Head of caudate nucleus (tissue), 42 donors: ENCODE measurements at regions of chrX and their contacts with region 1.

Region 1: GRCh38 chrX:13747836-13748235 is 13.3 kb downstream of the OFD1 start:
- DNase-seq: peak in 25 of 42 donors; percentile 12 to 79 (median 47)

Region 2: DNA sequence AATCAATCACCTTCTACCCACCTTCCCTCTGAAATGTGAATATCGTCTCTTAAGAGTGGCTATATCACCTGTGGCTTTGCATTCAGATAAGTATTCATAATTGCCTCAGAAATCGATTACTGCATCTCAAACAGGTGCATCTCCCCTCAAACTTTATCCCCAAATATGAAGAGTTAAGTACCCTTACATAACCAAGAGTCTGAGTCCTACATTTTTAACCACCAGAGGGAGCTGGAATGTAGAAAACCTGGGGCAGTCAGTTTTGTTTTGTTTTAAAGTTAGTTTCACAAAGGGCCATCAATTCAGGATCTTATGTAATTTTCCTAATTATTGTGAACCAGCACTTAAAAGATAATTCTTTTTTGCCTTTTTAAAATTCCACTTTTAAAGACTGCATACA is 89.2 kb before region 1 on chrX:
- intact Hi-C with region 1: loop called (anchors 5 kb)
- DNase-seq: peak in 7 of 42 donors; percentile 8 to 58 (median 45)

Region 3: DNA sequence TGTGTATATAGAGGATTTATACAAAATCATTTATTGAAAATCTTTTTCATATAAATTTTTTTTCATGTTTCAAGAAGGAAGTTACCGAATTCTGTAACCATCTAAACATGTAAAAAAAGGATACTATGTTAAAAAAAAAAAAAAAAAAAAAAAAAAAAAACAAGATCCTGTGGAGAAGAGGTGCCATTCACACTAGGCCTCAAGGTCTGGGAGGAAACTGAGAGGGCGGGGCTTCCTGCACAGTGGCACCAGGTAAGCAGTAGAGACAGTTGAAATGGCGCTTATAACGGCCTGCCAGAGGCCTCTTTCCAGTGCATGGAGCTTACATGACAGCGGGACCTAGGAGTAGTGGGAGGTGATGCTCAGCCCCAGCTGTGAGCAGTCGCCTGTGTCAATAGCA is 30.9 kb before region 1 on chrX:
- intact Hi-C with region 1: no loop called
- DNase-seq: no peak

Region 4: GRCh38 chrX:13898083-13898482 is 150.2 kb after region 1 on chrX:
- intact Hi-C with region 1: no loop called
- DNase-seq: peak in 29 of 42 donors; percentile 11 to 79 (median 52)